K562 (cell line): ENCODE measurements at regions of chr3 and their contacts with region 1.

Region 1: DNA sequence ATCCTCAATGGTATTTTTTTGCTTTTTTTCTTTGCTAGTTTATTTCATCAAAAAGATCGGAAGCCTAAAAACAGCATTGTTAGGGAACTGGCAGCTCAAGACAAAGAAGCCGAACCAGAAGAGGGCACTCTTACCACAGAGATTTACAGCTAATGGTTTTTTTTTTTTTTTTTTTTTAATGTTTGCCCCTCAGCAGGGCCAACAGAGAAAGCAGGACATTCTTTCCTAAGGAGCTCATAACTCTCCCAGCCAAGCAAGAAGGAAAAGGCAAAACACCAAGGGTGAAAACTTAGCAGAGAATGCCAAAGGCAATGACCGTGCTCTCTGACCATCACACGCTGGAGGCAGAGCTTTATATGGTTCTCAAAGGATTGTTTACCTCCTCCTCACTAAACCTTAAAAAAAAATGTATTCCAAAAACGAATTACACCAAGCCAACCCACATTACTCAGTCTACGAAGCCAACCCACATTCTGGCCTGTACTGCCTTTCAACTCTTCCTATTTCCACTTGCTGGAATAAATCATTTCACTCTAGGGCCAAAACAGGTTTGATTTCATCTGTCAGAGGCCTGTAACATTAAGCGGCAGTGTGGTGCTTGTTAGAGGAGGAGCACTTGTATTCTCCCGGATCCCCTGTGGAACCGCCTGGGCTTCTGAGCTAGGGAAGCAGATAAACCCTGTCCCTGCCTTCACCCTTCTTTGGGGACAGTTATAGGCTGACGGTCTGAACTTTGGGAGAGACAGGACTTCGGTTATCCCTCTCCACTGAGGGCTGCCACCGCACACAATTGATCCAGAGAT is 35.6 kb upstream of the GYG1 start:
- DNase-seq: peak in 2 of 4 experiments; percentile 13 to 59
- ATAC-seq: peak; percentile 63
- H3K4me3 ChIP-seq: no peak overlapping the region
- H3K27ac ChIP-seq: no peak overlapping the region
- H3K4me1 ChIP-seq: no peaks in the 10 kb centered on the region
- H3K27me3 ChIP-seq: peaks cover 0 to 3% of the 10 kb centered on the region in 2 experiments; a peak in 1 of 5 replicates
- CTCF ChIP-seq: peak; percentile 61 to 75 (median 61); a peak in 5 of 6 replicates
- EP300 ChIP-seq: no peak
- POLR2A ChIP-seq: no peak
- RAD21 ChIP-seq: peak; percentile 67 to 73

Region 2: GRCh38 chr3:148943506-148944205 is 12.1 kb before region 1 on chr3:
- CTCF ChIA-PET with region 1: no interaction called
- POLR2A ChIA-PET with region 1: no interaction called
- in situ Hi-C with region 1: no loop called
- intact Hi-C with region 1: no loop called
- DNase-seq: peak; percentile 70 to 77 (median 76)
- ATAC-seq: peak; percentile 98
- H3K4me3 ChIP-seq: no peak overlapping the region
- H3K27ac ChIP-seq: no peak overlapping the region
- H3K4me1 ChIP-seq: peaks cover 0 to 4% of the 10 kb centered on the region in 2 experiments; a peak in 2 of 5 replicates
- H3K27me3 ChIP-seq: peaks cover 0 to 5% of the 10 kb centered on the region in 2 experiments; a peak in 2 of 5 replicates
- CTCF ChIP-seq: peak; percentile 64 to 86 (median 75)
- EP300 ChIP-seq: peak; percentile 17; the same call in 1 of the 2 replicates
- POLR2A ChIP-seq: no peak
- RAD21 ChIP-seq: peak; percentile 69 to 85

Region 3: DNA sequence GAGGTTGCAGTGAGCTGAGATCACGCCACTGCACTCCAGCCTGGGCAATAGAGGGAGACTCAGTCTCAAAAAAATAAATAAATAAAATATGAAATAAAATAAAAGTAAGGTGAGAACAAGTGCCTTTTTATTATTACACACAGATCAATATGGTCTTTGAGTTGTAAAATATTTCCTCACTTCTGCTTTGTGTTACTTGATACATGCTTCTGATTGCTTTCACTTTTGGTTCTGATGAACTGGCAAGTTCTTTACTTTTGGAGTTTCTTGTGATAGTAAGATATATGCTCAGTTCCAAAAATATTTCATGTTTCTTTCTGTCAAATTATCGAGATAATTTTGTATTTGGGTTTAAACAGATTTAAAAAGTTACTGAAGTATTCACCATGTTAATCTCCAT is 19.0 kb after region 1 on chr3:
- CTCF ChIA-PET with region 1: no interaction called
- POLR2A ChIA-PET with region 1: no interaction called
- in situ Hi-C with region 1: no loop called
- intact Hi-C with region 1: no loop called
- DNase-seq: no peak
- ATAC-seq: no peak
- H3K4me3 ChIP-seq: no peak overlapping the region
- H3K27ac ChIP-seq: no peak overlapping the region
- H3K4me1 ChIP-seq: no peaks in the 10 kb centered on the region
- H3K27me3 ChIP-seq: no peaks in the 10 kb centered on the region; a peak in 2 of 5 replicates
- CTCF ChIP-seq: no peak
- EP300 ChIP-seq: no peak
- POLR2A ChIP-seq: no peak
- RAD21 ChIP-seq: no peak

Region 4: GRCh38 chr3:149120051-149120972 is 164.6 kb after region 1 on chr3:
- CTCF ChIA-PET with region 1: no interaction called
- POLR2A ChIA-PET with region 1: no interaction called
- in situ Hi-C with region 1: no loop called
- intact Hi-C with region 1: loop called (anchors 1 kb)
- DNase-seq: peak in 3 of 4 experiments; percentile 12 to 68 (median 52)
- ATAC-seq: peak; percentile 87
- H3K4me3 ChIP-seq: no peak overlapping the region
- H3K27ac ChIP-seq: no peak overlapping the region
- H3K4me1 ChIP-seq: no peaks in the 10 kb centered on the region
- H3K27me3 ChIP-seq: peaks cover 0 to 9% of the 10 kb centered on the region in 2 experiments; a peak in 2 of 5 replicates
- CTCF ChIP-seq: peak; percentile 55 to 85 (median 73)
- EP300 ChIP-seq: no peak
- POLR2A ChIP-seq: no peak
- RAD21 ChIP-seq: peak; percentile 97